PC-3 (cell line): ENCODE measurements at regions of chr10 and their contacts with region 1.

Region 1: DNA sequence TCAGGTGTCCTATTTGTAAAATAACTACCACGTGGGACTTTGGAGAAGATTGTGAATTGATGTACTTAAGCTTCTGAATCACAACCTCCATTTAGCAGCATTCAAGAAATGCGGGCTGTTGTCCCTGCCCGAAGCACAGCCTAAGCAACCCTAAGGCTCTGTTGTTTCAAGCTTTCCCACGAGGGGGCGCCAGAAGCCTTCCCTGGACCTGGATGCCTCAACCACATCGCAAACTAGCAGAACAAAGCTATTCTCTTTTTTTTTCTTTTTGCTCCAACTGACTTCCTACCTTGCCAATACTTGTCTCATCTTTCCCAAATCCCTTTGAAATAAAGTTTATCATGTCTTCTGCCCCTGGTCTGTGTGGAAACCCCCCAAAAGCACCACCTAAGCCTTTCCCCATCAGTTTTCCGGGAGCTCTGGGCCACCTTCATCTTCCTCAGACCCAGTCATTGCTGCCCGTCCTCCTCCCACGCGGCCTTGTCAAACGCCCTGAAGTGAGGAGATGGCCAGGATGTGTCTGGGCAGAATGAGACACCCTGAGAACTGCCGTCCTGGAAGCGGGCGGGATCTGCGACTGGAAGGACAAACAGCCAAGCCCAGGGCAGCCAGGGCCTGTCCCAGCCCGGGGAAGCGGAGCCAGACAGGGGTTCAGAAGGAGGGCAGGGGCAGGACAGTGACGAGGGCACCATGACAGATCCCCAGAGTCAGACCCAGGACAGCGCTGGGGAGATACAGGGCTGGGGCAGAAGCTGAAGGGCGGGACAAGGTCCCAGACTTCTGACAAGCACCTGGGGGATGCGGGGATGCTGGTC is 112.7 kb downstream of the SLIT1 start:
- DNase-seq: peak; percentile 79
- ATAC-seq: peak; percentile 90
- H3K4me3 ChIP-seq: no peak overlapping the region
- H3K27ac ChIP-seq: no peak overlapping the region
- H3K4me1 ChIP-seq: no peaks in the 10 kb centered on the region
- H3K27me3 ChIP-seq: 0 out of 2 replicates have a peak, but pooled peaks cover 5% of the 10 kb centered on the region
- CTCF ChIP-seq: peak; percentile 83

Region 2: DNA sequence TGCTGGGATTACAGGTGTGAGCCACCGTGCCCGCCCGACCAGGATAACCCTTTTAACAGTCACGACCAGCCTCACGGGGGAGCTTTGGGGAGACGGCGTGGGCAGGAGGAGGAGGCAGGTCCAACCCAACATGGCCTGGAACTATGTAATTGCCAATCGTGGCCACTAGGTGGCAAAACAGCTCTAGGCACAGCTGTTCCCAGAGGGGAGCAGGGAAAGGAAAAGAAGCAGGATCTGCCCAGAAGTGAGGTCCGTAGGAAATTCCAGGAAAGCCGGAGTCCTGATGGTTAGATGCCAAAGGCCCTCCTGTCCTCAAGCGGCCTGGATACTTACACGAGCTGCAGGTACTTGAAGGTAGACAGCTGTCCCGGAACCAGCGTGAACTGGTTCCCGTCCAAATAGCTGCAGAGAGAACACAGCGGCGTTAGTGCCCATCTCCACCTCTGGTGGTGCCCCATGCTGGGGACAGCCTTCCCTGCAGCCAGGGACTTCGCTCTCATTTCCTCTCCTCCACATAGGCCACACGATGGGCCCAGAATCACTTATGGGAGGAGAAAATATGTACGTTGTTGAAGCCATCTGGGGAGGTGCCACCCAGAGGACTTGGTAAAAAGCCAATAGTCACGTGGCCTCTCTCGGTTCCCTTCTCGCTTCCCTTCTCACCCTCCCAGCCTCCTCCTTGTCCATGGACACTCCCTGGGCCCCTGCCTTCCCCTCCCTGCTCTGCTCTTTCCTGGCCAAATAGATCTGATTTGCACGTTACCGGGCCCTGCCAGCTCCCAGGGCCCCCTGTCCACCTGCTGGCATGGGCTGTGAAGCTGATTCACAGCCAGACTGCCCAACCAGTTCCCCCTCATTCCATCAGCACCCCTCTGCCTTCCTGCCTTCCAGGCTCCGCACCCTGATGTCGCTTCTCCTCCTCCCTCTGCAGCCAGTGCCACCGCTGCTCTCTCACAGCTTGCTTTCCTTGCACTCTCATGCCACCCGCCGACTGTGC is 35.4 kb before region 1 on chr10:
- CTCF ChIA-PET with region 1: interaction called, 12 read pairs
- POLR2A ChIA-PET with region 1: no interaction called
- intact Hi-C with region 1: no loop called
- DNase-seq: peak; percentile 88
- ATAC-seq: peak; percentile 95
- H3K4me3 ChIP-seq: peak overlapping the region; percentile 49
- H3K27ac ChIP-seq: no peak overlapping the region
- H3K4me1 ChIP-seq: 0 out of 2 replicates have a peak, but pooled peaks cover 8% of the 10 kb centered on the region
- H3K27me3 ChIP-seq: no peaks in the 10 kb centered on the region
- CTCF ChIP-seq: peak; percentile 82

Region 3: GRCh38 chr10:97117372-97117771 is 44.3 kb after region 1 on chr10:
- CTCF ChIA-PET with region 1: interaction called, 5 read pairs
- POLR2A ChIA-PET with region 1: no interaction called
- intact Hi-C with region 1: loop called (anchors 2 kb)
- DNase-seq: peak; percentile 43
- ATAC-seq: no peak; the same call in 1 of the 2 replicates
- H3K4me3 ChIP-seq: no peak overlapping the region
- H3K27ac ChIP-seq: no peak overlapping the region
- H3K4me1 ChIP-seq: no peaks in the 10 kb centered on the region
- H3K27me3 ChIP-seq: peaks cover 24% of the 10 kb centered on the region
- CTCF ChIP-seq: peak; percentile 54

Region 4: DNA sequence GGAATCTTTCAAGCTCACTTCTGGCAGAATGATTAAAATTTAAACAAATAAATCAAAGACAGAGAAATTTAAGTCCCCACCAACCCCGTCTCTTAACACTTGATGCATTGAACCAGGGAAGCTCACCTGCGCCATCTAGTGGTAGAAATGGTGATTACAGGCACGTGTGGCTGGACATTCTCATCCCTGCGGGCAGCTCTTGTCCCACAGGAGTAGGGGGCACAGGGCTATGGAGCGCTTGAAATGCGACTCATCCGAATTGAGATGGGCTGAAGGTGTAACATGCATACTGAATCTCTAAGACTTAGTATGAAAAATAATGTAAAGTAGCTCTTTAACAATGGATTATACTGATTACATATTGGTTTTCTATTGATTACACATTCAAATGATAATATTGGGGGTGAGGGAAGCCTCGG is 137.5 kb after region 1 on chr10:
- CTCF ChIA-PET with region 1: interaction called, 27 read pairs
- POLR2A ChIA-PET with region 1: no interaction called
- intact Hi-C with region 1: loop called (anchors 2 kb)
- DNase-seq: peak; percentile 81
- ATAC-seq: peak; percentile 64; the same call in 1 of the 2 replicates
- H3K4me3 ChIP-seq: no peak overlapping the region
- H3K27ac ChIP-seq: no peak overlapping the region
- H3K4me1 ChIP-seq: no peaks in the 10 kb centered on the region
- H3K27me3 ChIP-seq: no peaks in the 10 kb centered on the region
- CTCF ChIP-seq: peak; percentile 89

Region 5: DNA sequence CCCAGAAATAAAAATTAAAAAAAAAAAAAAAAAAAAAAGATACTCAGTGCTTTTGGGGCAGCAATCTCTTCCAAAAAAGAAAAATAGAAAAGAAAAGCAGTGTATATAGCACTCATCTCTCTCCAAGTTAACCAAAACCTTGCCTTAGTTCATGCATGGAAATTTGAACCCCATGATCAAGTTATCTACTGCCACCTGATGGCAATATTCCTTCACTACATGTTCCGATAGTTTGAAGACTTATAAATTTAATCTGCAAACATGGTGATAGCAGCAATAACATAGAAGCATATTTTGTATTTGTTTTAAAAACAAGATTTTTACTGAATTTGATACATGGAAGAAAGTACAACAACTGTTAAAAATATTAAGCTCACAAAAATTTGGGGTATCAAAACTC is 161.3 kb after region 1 on chr10:
- CTCF ChIA-PET with region 1: interaction called, 9 read pairs
- POLR2A ChIA-PET with region 1: interaction called, 6 read pairs
- intact Hi-C with region 1: loop called (anchors 2 kb)
- DNase-seq: peak; percentile 61
- ATAC-seq: no peak
- H3K4me3 ChIP-seq: no peak overlapping the region
- H3K27ac ChIP-seq: no peak overlapping the region
- H3K4me1 ChIP-seq: peaks cover 12% of the 10 kb centered on the region
- H3K27me3 ChIP-seq: no peaks in the 10 kb centered on the region
- CTCF ChIP-seq: peak; percentile 74